MCF 10A (cell line): ENCODE measurements at regions of chr12 and their contacts with region 1.

Region 1: GRCh38 chr12:114684098-114684869 is at the start of gene TBX3:
- DNase-seq: peak; percentile 99
- H3K4me3 Mint-ChIP-seq: peak within 1 kb of the TSS; percentile 97
- H3K27ac Mint-ChIP-seq: peak within 1 kb of the TSS; percentile 86
- H3K4me1 Mint-ChIP-seq: peaks cover 17% of the 10 kb centered on the region
- H3K27me3 Mint-ChIP-seq: peaks cover 14% of the 10 kb centered on the region
- CTCF ChIP-seq: peak; percentile 60
- total RNA-seq, gene TBX3: 6.6 and 8.0 TPM in 2 replicates

Region 2: DNA sequence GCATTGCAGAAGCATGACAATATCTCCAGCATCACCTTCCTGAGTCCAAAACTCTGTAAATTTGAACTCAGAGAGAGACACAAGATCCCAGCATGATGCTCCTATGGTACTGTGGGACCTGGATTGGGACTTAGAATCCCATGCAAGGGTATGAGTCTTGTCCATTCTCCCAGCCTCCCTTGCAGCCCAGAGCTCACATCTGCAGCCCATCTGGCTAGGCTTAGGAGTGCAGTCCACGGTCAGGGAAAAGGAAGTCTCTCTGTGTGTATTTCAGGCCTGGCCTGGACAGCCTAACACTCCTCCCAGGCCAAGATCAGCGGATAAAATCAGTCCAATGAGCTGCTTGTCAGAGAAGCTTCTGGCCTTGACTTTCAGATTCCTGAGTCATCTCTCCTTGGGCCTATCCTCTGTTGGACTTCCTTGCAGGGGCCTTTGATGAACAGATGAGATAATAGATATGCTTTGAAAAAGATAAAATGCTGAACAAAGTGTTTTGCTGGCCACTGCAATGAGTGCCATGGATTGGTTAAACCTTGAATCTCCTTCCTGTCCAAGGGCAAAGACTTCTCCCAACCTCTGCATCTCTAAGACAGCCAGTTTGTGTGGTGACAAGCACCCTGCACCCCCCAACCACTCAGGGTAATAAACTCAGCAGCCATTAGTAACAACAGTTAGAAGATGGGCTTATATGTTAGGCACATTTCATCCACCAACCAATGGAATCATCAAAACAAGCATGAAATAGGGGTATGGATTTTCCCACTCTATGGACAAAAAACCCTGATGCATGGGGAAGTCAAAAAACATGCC is 412.5 kb after region 1 on chr12:
- CTCF ChIA-PET with region 1: no interaction called
- POLR2A ChIA-PET with region 1: no interaction called
- intact Hi-C with region 1: loop called (anchors 10 kb)
- DNase-seq: no peak
- H3K4me3 Mint-ChIP-seq: no peak overlapping the region
- H3K27ac Mint-ChIP-seq: no peak overlapping the region
- H3K4me1 Mint-ChIP-seq: no peaks in the 10 kb centered on the region
- H3K27me3 Mint-ChIP-seq: no peaks in the 10 kb centered on the region
- CTCF ChIP-seq: no peak

Region 3: DNA sequence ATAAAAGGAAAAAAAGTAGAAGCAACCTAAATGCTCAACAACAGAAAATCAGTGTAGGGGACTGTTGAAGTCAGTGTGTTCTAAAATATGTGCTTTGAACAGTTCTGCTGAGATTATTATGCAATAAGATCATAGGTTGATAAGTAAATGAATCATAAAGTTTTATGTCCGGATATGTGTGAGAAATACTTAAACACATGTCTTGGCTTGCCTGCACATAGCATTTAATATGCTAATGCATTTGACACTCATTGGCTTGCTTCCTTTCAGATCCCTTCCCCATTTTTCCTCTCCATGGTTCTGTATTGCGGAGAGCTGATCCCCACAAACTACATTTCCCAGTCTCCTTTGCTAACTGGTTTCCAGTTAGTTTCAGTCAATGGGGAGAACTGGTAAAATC is 573.5 kb after region 1 on chr12:
- CTCF ChIA-PET with region 1: interaction called, 5 read pairs
- POLR2A ChIA-PET with region 1: interaction called, 5 read pairs
- intact Hi-C with region 1: loop called (anchors 2 kb)
- DNase-seq: peak; percentile 88
- H3K4me3 Mint-ChIP-seq: no peak overlapping the region
- H3K27ac Mint-ChIP-seq: peak overlapping the region; percentile 34
- H3K4me1 Mint-ChIP-seq: peaks cover 14% of the 10 kb centered on the region
- H3K27me3 Mint-ChIP-seq: no peaks in the 10 kb centered on the region
- CTCF ChIP-seq: no peak

Region 4: DNA sequence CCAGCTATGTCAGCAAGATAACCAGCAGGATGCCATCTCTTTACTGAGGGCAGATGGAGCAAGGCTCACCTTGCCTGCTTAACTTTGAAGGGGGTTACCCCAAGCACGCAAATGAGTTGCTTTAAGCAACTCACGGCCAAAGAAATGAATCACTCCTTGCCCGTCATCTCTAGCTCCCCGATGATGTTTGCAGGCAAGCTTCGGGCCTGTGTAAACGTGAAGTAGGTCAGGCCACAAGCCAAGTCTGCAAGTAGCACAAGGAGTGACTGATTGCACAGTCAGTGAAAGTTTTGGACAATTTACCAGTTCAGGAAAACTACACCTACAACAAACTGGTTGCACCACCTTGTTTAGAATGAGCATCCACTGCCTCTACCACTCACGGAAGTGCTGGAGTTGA is 699.4 kb after region 1 on chr12:
- CTCF ChIA-PET with region 1: interaction called, 6 read pairs
- POLR2A ChIA-PET with region 1: interaction called, 26 read pairs
- intact Hi-C with region 1: loop called (anchors 1 kb)
- DNase-seq: peak; percentile 97
- H3K4me3 Mint-ChIP-seq: peak overlapping the region; percentile 21
- H3K27ac Mint-ChIP-seq: peak overlapping the region; percentile 75
- H3K4me1 Mint-ChIP-seq: peaks cover 15% of the 10 kb centered on the region
- H3K27me3 Mint-ChIP-seq: no peaks in the 10 kb centered on the region
- CTCF ChIP-seq: no peak

Region 5: GRCh38 chr12:115632308-115632707 is 948.0 kb after region 1 on chr12:
- CTCF ChIA-PET with region 1: interaction called, 8 read pairs
- POLR2A ChIA-PET with region 1: interaction called, 5 read pairs
- intact Hi-C with region 1: loop called (anchors 1 kb)
- DNase-seq: peak; percentile 38
- H3K4me3 Mint-ChIP-seq: no peak overlapping the region
- H3K27ac Mint-ChIP-seq: no peak overlapping the region
- H3K4me1 Mint-ChIP-seq: peaks cover 10% of the 10 kb centered on the region
- H3K27me3 Mint-ChIP-seq: no peaks in the 10 kb centered on the region
- CTCF ChIP-seq: peak; percentile 46